K562 (cell line): ENCODE measurements at regions of chr21 and their contacts with region 1.

Region 1: DNA sequence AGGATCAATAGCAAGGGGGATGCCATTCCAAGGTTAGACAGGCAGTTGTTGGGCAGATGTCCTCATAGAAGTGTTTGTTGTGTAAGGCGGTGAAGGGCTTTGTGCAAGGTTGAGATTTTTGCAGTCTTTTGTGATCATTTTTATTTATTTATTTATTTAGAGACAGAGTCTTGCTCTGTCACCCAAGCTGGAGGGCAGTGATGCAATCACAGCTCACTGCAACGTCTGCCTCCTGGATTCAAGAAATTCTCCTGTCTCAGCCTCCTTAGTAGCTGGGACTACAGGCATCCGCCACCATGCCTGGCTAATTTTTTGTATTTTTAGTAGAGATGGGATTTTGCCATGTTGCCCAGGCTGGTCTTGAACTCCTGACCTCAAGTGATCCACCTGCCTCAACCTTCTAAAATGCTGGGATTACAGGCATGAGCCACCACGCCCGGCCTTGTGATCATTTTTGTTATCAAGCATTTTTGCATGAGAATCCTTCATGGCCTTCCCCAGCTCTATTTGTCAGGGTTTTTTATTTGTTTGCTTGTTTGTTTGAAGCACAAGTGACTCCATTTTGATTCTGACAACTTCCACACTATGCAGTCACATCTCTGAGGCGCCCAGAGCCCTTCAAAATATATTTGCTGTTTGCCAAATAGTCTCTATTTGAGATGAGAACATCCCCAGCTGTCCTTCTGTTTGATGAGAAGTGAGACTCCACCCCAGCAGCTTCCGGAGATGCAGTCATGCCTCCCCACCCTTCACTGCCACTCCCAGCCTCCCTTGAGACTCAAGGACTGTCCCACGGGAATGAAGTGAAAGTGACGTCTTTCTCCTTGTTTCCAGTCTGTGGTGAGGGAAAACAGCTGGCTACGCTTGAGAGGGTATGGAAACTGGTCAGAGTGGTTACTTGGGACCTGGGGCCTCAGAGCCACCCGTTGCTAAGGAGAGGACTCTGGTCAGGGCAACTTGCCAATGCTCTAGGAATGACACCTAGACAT is 38.0 kb downstream of the TMEM50B start:
- DNase-seq: peak in 1 of 4 experiments; percentile 37
- ATAC-seq: peak; percentile 54
- H3K4me3 ChIP-seq: no peak overlapping the region
- H3K27ac ChIP-seq: no peak overlapping the region
- H3K4me1 ChIP-seq: no peaks in the 10 kb centered on the region; a peak in 1 of 5 replicates
- H3K27me3 ChIP-seq: no peaks in the 10 kb centered on the region
- CTCF ChIP-seq: no peak
- EP300 ChIP-seq: no peak
- POLR2A ChIP-seq: 0 out of 2 replicates have a peak, but pooled peaks have one; percentile 18
- RAD21 ChIP-seq: no peak

Region 2: GRCh38 chr21:32834916-32835235 is 606.9 kb before region 1 on chr21:
- CTCF ChIA-PET with region 1: no interaction called
- POLR2A ChIA-PET with region 1: no interaction called
- in situ Hi-C with region 1: loop called (anchors 10 kb)
- intact Hi-C with region 1: loop called (anchors 10 kb)
- DNase-seq: no peak
- ATAC-seq: no peak
- H3K4me3 ChIP-seq: no peak overlapping the region
- H3K27ac ChIP-seq: no peak overlapping the region
- H3K4me1 ChIP-seq: peaks cover 0 to 3% of the 10 kb centered on the region in 2 experiments; a peak in 1 of 5 replicates
- H3K27me3 ChIP-seq: peaks cover 12 to 15% of the 10 kb centered on the region in 2 experiments
- CTCF ChIP-seq: no peak
- EP300 ChIP-seq: no peak
- POLR2A ChIP-seq: no peak
- RAD21 ChIP-seq: no peak

Region 3: GRCh38 chr21:32921632-32922230 is 520.1 kb before region 1 on chr21:
- CTCF ChIA-PET with region 1: no interaction called
- POLR2A ChIA-PET with region 1: no interaction called
- in situ Hi-C with region 1: loop called (anchors 10 kb)
- intact Hi-C with region 1: no loop called
- DNase-seq: peak; percentile 42 to 67 (median 62)
- ATAC-seq: peak; percentile 80
- H3K4me3 ChIP-seq: no peak overlapping the region
- H3K27ac ChIP-seq: no peak overlapping the region
- H3K4me1 ChIP-seq: no peaks in the 10 kb centered on the region
- H3K27me3 ChIP-seq: peaks cover 0 to 5% of the 10 kb centered on the region in 2 experiments; a peak in 1 of 5 replicates
- CTCF ChIP-seq: peak; percentile 65 to 82 (median 67)
- EP300 ChIP-seq: no peak
- POLR2A ChIP-seq: no peak
- RAD21 ChIP-seq: peak in 1 of 2 experiments; percentile 51; a peak in 3 of 4 replicates

Region 4: DNA sequence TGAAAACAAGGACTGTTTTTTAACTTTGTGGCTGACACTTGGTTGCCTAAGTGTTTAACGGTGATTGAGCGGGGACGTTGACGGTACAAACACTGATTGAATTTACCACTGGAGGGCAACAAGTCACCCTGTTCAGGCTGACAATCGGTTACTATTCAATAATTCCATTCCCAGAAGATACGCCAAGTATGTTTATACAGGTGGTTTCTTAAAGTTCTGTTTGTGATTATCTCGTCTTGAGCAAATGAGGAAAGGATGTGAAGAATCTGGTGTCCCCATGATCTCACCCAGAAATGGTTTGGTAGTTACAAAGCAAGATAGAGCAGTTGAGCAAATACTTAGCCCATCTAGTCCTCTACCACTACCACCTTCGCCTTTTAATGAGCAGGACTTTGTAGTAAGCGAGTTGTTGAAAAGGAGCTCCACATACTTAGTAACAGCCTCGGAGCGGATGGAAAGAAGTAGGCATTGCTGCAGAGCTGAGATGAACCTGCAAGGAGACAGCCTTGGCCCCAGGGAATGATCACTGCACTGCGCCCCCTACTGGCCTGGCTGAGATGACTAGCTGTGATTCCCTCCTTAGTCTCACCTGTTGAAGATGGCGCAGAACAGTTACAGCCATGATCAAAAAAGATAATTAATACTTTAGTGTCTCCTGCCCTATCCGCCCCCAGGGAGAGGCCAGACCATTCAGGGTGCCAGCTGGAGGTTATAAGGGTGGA is 80.7 kb before region 1 on chr21:
- CTCF ChIA-PET with region 1: interaction called, 14 read pairs
- POLR2A ChIA-PET with region 1: interaction called, 3 read pairs
- in situ Hi-C with region 1: no loop called
- intact Hi-C with region 1: no loop called
- DNase-seq: peak; percentile 87 to 90 (median 88)
- ATAC-seq: peak; percentile 97
- H3K4me3 ChIP-seq: peak overlapping the region; percentile 23
- H3K27ac ChIP-seq: no peak overlapping the region
- H3K4me1 ChIP-seq: peaks cover 9 to 20% of the 10 kb centered on the region in 2 experiments; a peak in 3 of 5 replicates
- H3K27me3 ChIP-seq: no peaks in the 10 kb centered on the region
- CTCF ChIP-seq: peak; percentile 90 to 97 (median 92)
- EP300 ChIP-seq: no peak
- POLR2A ChIP-seq: no peak
- RAD21 ChIP-seq: peak; percentile 48 to 75

Region 5: GRCh38 chr21:33374450-33375096 is 67.2 kb before region 1 on chr21:
- CTCF ChIA-PET with region 1: no interaction called
- POLR2A ChIA-PET with region 1: no interaction called
- in situ Hi-C with region 1: no loop called
- intact Hi-C with region 1: loop called (anchors 2 kb)
- DNase-seq: peak in 3 of 4 experiments; percentile 36 to 77 (median 55)
- ATAC-seq: peak; percentile 94
- H3K4me3 ChIP-seq: no peak overlapping the region
- H3K27ac ChIP-seq: no peak overlapping the region
- H3K4me1 ChIP-seq: peaks cover 0 to under 1% of the 10 kb centered on the region in 2 experiments; a peak in 1 of 5 replicates
- H3K27me3 ChIP-seq: peaks cover 6 to 14% of the 10 kb centered on the region in 2 experiments; a peak in 2 of 5 replicates
- CTCF ChIP-seq: peak; percentile 75 to 96 (median 84)
- EP300 ChIP-seq: no peak
- POLR2A ChIP-seq: no peak
- RAD21 ChIP-seq: peak; percentile 95 to 96

Region 6: GRCh38 chr21:33608559-33608958 is 166.8 kb after region 1 on chr21:
- CTCF ChIA-PET with region 1: no interaction called
- POLR2A ChIA-PET with region 1: no interaction called
- in situ Hi-C with region 1: no loop called
- intact Hi-C with region 1: loop called (anchors 1 kb)
- DNase-seq: no peak
- ATAC-seq: no peak
- H3K4me3 ChIP-seq: no peak overlapping the region
- H3K27ac ChIP-seq: no peak overlapping the region
- H3K4me1 ChIP-seq: no peaks in the 10 kb centered on the region
- H3K27me3 ChIP-seq: no peaks in the 10 kb centered on the region
- CTCF ChIP-seq: no peak
- EP300 ChIP-seq: no peak
- POLR2A ChIP-seq: no peak
- RAD21 ChIP-seq: no peak